ENCODE measurements at regions of chr19 and their contacts with region 1.

Region 1: DNA sequence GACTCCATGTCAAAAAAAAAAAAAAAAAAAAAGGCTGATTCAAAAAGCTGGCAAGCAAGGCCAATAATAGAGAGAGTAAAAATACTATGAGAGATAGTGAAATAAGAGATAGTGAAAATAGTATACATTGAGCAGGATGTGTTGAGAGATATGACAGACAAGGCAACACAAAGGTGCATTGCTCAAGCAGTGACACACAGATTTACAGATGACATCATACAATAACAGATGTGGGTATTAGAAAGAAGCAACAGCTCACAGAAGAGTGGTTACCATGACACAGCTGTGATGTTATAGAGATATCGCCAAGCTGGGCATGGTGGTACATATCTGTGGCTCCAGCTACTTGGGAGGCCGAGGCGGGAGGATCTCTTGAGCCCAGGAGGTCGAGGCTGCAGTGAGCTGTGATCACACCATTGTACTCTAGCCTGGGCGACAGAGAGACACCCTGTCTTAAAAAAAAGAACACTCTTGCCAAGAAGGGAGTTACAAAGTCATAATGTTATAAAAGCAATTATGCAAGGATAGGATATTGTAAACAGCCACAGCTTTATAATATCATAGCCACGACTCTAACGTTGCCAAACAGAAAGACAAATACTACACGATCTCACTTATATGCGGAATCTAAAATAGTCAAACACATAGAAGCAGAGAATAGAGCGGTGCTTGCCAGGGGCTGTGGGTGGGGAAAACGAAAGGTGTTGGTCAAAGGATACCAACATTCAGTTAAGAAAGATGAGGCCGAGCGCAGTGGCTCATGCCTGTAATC is 10.3 kb downstream of the TNFSF9 start:
- DNase-seq: no peak
- ATAC-seq: no peak
- H3K4me3 ChIP-seq: no peak overlapping the region
- H3K4me3 Mint-ChIP-seq: no peak overlapping the region
- H3K27ac ChIP-seq: no peak overlapping the region
- H3K27ac Mint-ChIP-seq: no peak overlapping the region
- H3K4me1 ChIP-seq: peaks cover 5 to 32% of the 10 kb centered on the region in 2 experiments
- H3K4me1 Mint-ChIP-seq: peaks cover 12 to 22% (median 14%) of the 10 kb centered on the region in 3 donors
- H3K27me3 ChIP-seq: peaks cover 0 to 17% of the 10 kb centered on the region in 2 experiments
- H3K27me3 Mint-ChIP-seq: peaks cover 0 to 2% of the 10 kb centered on the region in 2 donors

Region 2: GRCh38 chr19:6018786-6019185 is 522.3 kb before region 1 on chr19:
- CTCF ChIA-PET with region 1: no interaction called
- POLR2A ChIA-PET with region 1: no interaction called
- DNase-seq: peak in 5 of 35 experiments; percentile 0 to 19 (median 10)
- ATAC-seq: no peak
- H3K4me3 ChIP-seq: no peak overlapping the region
- H3K4me3 Mint-ChIP-seq: no peak overlapping the region
- H3K27ac ChIP-seq: no peak overlapping the region
- H3K27ac Mint-ChIP-seq: no peak overlapping the region
- H3K4me1 ChIP-seq: peaks cover 7 to 8% of the 10 kb centered on the region in 2 experiments
- H3K4me1 Mint-ChIP-seq: peaks cover 4 to 18% (median 4%) of the 10 kb centered on the region in 3 donors
- H3K27me3 ChIP-seq: peaks cover 0 to 26% of the 10 kb centered on the region in 2 experiments
- H3K27me3 Mint-ChIP-seq: peaks cover 0 to 8% of the 10 kb centered on the region in 2 donors

Region 3: DNA sequence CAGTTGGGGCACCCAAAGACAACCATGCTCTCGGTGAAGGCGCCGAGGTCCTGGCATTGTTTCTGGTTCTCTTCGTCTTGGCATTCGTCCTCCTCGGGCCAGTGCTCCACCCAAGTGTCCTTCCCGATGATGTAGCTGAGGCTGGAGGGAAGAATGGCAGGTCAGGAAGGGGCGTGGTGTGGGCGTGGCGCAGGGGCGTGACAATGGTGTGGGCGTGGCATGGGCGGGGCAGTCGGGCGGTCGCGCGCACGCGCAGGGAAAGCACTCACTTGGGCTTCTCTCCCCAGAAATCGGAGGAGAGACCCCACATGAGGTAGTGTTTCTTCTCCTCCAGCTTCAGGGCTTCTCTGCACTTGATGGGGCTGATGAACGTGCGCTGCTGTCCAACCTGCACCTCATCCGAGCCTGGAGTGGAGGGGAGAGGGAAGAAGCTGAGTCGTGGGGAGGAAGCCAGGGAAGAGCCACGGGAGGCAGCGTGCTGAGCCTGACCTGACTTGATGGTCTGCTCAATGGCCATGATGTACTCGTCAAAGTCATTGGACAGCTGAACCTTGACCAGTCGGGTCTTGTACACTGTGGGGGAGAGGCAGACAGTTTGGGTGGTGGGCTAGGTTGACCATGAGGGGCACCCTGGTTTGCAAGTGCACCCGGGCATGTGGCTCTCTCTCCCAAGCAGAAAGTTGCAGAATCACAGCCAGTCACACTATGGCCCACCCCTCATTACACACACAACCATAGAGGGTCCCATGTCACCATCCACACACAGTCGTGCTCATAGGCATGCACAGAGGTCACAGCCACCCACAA is 137.0 kb after region 1 on chr19:
- CTCF ChIA-PET with region 1: no interaction called
- POLR2A ChIA-PET with region 1: no interaction called
- DNase-seq: peak in 9 of 35 experiments; percentile 24 to 56 (median 39)
- ATAC-seq: peak in 1 of 4 experiments; percentile 31
- H3K4me3 ChIP-seq: no peak overlapping the region
- H3K4me3 Mint-ChIP-seq: peak overlapping the region; percentile 7 to 63 (median 56)
- H3K27ac ChIP-seq: no peak overlapping the region
- H3K27ac Mint-ChIP-seq: peak overlapping the region; percentile 55 to 66
- H3K4me1 ChIP-seq: peaks cover 2 to 42% of the 10 kb centered on the region in 2 experiments
- H3K4me1 Mint-ChIP-seq: peaks cover 35 to 48% (median 44%) of the 10 kb centered on the region in 3 donors
- H3K27me3 ChIP-seq: peaks cover 0 to 2% of the 10 kb centered on the region in 2 experiments
- H3K27me3 Mint-ChIP-seq: no peaks in the 10 kb centered on the region

Region 4: GRCh38 chr19:6779206-6779605 is 238.1 kb after region 1 on chr19:
- CTCF ChIA-PET with region 1: interaction called in 1 of 2 experiments, 12 read pairs
- POLR2A ChIA-PET with region 1: no interaction called
- DNase-seq: no peak
- ATAC-seq: no peak
- H3K4me3 ChIP-seq: no peak overlapping the region
- H3K4me3 Mint-ChIP-seq: peak overlapping the region in 1 of 3 donors; percentile 31
- H3K27ac ChIP-seq: no peak overlapping the region
- H3K27ac Mint-ChIP-seq: peak overlapping the region; percentile 66 to 82
- H3K4me1 ChIP-seq: peaks cover 23 to 66% of the 10 kb centered on the region in 2 experiments
- H3K4me1 Mint-ChIP-seq: peaks cover 63 to 68% (median 66%) of the 10 kb centered on the region in 3 donors
- H3K27me3 ChIP-seq: no peaks in the 10 kb centered on the region
- H3K27me3 Mint-ChIP-seq: no peaks in the 10 kb centered on the region

Measured in T-cell (primary cell).